ENCODE measurements at regions of chr15 and their contacts with region 1.

Region 1: GRCh38 chr15:41603941-41604911 is 45.2 kb downstream of the TYRO3 start:
- DNase-seq: peak; percentile 67
- H3K4me3 ChIP-seq: peak overlapping the region; percentile 16 to 22 (median 16)
- H3K27ac ChIP-seq: no peak overlapping the region
- H3K4me1 ChIP-seq: peaks cover 13% of the 10 kb centered on the region
- H3K27me3 ChIP-seq: no peaks in the 10 kb centered on the region
- CTCF ChIP-seq: peak; percentile 82 to 86

Region 2: DNA sequence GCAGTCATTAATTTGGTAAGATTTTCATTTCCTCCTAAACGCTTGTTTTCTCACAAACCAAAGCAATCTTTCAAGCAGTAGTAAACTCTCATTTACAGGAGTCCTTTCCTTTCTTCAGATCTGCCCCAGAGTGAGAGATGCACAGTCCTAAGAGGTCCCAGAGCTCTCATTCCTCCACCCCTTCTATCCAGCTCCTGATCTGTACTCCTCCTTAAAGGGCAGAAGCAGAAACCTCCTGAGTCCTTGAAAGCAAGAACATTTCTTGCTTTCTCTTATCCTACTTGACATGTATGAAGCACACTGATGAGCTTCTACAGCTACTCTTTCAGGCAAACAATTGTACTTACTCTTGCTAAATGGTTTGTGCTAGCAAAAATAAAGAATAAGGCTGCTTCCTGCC is 385.4 kb before region 1 on chr15:
- CTCF ChIA-PET with region 1: no interaction called
- dilution Hi-C with region 1: no loop called
- in situ Hi-C with region 1: no loop called
- intact Hi-C with region 1: no loop called
- DNase-seq: no peak
- H3K4me3 ChIP-seq: no peak overlapping the region
- H3K27ac ChIP-seq: no peak overlapping the region
- H3K4me1 ChIP-seq: no peaks in the 10 kb centered on the region
- H3K27me3 ChIP-seq: no peaks in the 10 kb centered on the region
- CTCF ChIP-seq: no peak

Region 3: DNA sequence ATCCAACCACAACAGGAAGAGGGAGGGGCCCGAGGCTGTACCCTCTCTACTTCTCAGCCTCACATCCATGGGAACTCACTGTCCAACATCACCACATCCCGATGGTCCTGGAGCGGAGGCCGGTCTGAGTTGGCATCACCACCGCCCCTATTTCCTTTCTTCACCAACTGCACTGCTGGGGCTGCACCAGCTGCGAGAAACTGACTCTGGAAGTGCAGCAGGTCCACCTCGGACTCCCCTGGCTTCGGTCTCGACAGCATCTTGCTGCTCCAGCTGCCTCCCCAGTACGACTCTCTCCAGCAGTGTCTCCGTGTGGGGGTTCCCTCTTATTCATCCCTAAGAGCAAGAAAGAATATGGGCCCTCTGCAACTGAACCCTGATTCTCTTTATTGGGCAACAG is 67.4 kb before region 1 on chr15:
- CTCF ChIA-PET with region 1: no interaction called
- dilution Hi-C with region 1: loop called (anchors 5 kb)
- in situ Hi-C with region 1: no loop called
- intact Hi-C with region 1: no loop called
- DNase-seq: no peak
- H3K4me3 ChIP-seq: no peak overlapping the region
- H3K27ac ChIP-seq: no peak overlapping the region
- H3K4me1 ChIP-seq: no peaks in the 10 kb centered on the region
- H3K27me3 ChIP-seq: no peaks in the 10 kb centered on the region
- CTCF ChIP-seq: no peak

Region 4: GRCh38 chr15:41568350-41569017 is 35.7 kb before region 1 on chr15:
- CTCF ChIA-PET with region 1: no interaction called
- dilution Hi-C with region 1: no loop called
- in situ Hi-C with region 1: no loop called
- intact Hi-C with region 1: no loop called
- DNase-seq: no peak
- H3K4me3 ChIP-seq: no peak overlapping the region
- H3K27ac ChIP-seq: no peak overlapping the region
- H3K4me1 ChIP-seq: no peaks in the 10 kb centered on the region
- H3K27me3 ChIP-seq: no peaks in the 10 kb centered on the region
- CTCF ChIP-seq: no peak

Region 5: GRCh38 chr15:41621200-41622193 is 17.3 kb after region 1 on chr15:
- CTCF ChIA-PET with region 1: no interaction called
- dilution Hi-C with region 1: no loop called
- in situ Hi-C with region 1: no loop called
- intact Hi-C with region 1: loop called (anchors 2 kb)
- DNase-seq: peak; percentile 65
- H3K4me3 ChIP-seq: peak overlapping the region; percentile 38 to 60 (median 51)
- H3K27ac ChIP-seq: no peak overlapping the region
- H3K4me1 ChIP-seq: peaks cover 7% of the 10 kb centered on the region
- H3K27me3 ChIP-seq: no peaks in the 10 kb centered on the region
- CTCF ChIP-seq: no peak

Region 6: DNA sequence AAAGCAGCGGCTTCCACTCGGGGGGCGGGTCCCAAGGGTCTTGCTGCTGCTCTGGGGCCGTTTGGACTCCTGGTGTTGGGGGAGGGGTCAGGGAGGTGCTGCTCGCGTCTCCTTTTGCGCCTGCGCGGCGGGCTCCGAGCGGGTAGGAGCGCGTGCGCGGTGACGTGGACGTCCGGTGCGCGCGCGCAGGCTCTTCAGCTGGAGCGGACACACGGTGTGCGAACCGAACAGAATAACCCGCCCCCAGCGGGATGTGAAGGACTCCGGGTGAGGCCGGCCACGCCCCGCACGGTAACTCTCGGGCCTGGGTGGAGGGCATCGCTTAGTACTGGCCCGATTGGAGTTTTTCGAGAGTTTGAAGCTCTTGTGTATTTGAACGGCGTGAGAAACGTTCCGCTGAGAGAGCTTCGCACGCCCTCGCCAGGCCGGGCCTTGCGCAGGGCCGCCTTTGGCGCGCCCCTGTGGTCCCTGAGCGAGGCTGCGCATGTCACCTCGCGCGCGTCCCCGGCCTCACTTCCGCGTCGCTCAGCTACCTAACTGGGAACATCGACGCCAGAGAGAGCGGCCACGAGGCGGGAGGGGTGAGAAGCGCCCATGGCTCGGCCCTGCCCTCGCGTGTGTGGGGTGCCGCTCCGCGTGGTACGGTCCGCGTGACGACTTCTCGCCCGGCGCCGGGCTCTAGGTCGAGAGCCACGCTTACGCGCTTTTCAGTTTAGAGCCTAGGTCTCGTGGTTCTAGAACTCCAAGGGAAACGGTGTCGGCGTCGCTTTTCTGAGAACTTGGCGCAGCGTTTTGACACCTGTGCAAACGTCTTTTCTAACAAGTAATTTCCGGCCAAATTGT is 56.2 kb after region 1 on chr15 and contains the start of gene MGA:
- CTCF ChIA-PET with region 1: no interaction called
- dilution Hi-C with region 1: loop called (anchors 5 kb)
- in situ Hi-C with region 1: no loop called
- intact Hi-C with region 1: loop called (anchors 1 kb)
- DNase-seq: peak; percentile 89
- H3K4me3 ChIP-seq: peak within 1 kb of the TSS; percentile 43 to 62 (median 53)
- H3K27ac ChIP-seq: peak within 1 kb of the TSS; percentile 36
- H3K4me1 ChIP-seq: peaks cover 23% of the 10 kb centered on the region
- H3K27me3 ChIP-seq: no peaks in the 10 kb centered on the region
- CTCF ChIP-seq: no peak
- total RNA-seq, gene MGA: 22.8 to 30.3 TPM

Region 7: GRCh38 chr15:41698779-41699178 is 94.6 kb after region 1 on chr15:
- CTCF ChIA-PET with region 1: interaction called, 13 read pairs
- dilution Hi-C with region 1: no loop called
- in situ Hi-C with region 1: no loop called
- intact Hi-C with region 1: no loop called
- DNase-seq: peak; percentile 75
- H3K4me3 ChIP-seq: no peak overlapping the region
- H3K27ac ChIP-seq: no peak overlapping the region
- H3K4me1 ChIP-seq: peaks cover 3% of the 10 kb centered on the region
- H3K27me3 ChIP-seq: no peaks in the 10 kb centered on the region
- CTCF ChIP-seq: no peak

Region 8: GRCh38 chr15:41713047-41713446 is 108.8 kb after region 1 on chr15:
- CTCF ChIA-PET with region 1: no interaction called
- dilution Hi-C with region 1: no loop called
- in situ Hi-C with region 1: no loop called
- intact Hi-C with region 1: loop called (anchors 5 kb)
- DNase-seq: no peak
- H3K4me3 ChIP-seq: no peak overlapping the region
- H3K27ac ChIP-seq: no peak overlapping the region
- H3K4me1 ChIP-seq: no peaks in the 10 kb centered on the region
- H3K27me3 ChIP-seq: no peaks in the 10 kb centered on the region
- CTCF ChIP-seq: no peak